ENCODE measurements at regions of chr9 and their contacts with region 1.

Region 1: GRCh38 chr9:70602321-70603019 is 188.0 kb upstream of the KLF9 start:
- DNase-seq: no peak
- ATAC-seq: peak; percentile 75
- H3K4me3 Mint-ChIP-seq: no peak overlapping the region
- H3K27ac Mint-ChIP-seq: no peak overlapping the region
- H3K4me1 Mint-ChIP-seq: peaks cover 10% of the 10 kb centered on the region
- H3K27me3 Mint-ChIP-seq: peaks cover 3% of the 10 kb centered on the region
- CTCF ChIP-seq: peak; percentile 51

Region 2: DNA sequence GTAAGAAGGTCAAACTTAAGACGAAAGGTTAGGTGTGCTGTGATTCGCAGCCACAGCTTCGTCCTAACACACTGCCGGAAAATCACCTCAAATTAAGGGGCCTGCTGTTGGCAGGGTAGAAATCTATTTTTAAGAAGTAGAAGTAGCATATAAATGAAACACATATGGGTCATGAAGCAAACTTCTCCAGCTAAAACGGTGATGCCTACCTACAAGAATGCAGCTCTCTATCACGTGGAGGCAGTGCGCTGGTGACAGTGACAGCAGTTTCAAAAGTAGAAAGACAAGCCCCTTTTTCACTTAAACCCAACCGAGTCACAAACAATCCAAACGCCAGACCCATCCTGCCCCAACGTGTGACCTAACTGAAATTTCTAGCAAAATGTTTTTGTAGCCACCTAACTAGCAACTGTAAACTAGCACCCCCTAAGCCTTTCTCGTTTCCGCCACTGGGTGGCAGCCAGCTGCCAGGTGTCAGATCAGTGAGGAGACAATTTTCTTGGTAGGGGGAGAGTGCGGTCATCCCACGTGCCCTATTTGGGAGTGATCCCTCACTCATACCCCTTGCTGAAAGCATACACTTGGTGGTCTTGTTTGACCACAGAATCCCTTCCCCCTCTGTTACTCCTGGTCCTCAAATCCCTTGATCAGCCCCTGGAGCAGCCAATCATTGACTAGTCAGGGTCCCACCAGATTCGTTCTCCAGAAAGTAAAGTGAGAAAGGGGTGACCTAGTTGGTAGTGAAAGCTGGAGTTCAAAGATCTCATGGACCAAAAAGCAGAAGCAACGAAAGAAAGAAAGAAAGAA is 630.6 kb before region 1 on chr9:
- CTCF ChIA-PET with region 1: interaction called, 41 read pairs
- POLR2A ChIA-PET with region 1: no interaction called
- intact Hi-C with region 1: no loop called
- DNase-seq: peak; percentile 17
- ATAC-seq: no peak
- H3K4me3 Mint-ChIP-seq: no peak overlapping the region
- H3K27ac Mint-ChIP-seq: no peak overlapping the region
- H3K4me1 Mint-ChIP-seq: no peaks in the 10 kb centered on the region
- H3K27me3 Mint-ChIP-seq: peaks cover 16% of the 10 kb centered on the region
- CTCF ChIP-seq: no peak

Region 3: GRCh38 chr9:70340572-70340971 is 261.9 kb before region 1 on chr9:
- CTCF ChIA-PET with region 1: interaction called, 68 read pairs
- POLR2A ChIA-PET with region 1: no interaction called
- intact Hi-C with region 1: loop called (anchors 1 kb)
- DNase-seq: no peak
- ATAC-seq: no peak
- H3K4me3 Mint-ChIP-seq: no peak overlapping the region
- H3K27ac Mint-ChIP-seq: no peak overlapping the region
- H3K4me1 Mint-ChIP-seq: no peaks in the 10 kb centered on the region
- H3K27me3 Mint-ChIP-seq: no peaks in the 10 kb centered on the region
- CTCF ChIP-seq: no peak

Region 4: GRCh38 chr9:70484210-70485130 is 118.0 kb before region 1 on chr9:
- CTCF ChIA-PET with region 1: interaction called, 47 read pairs
- POLR2A ChIA-PET with region 1: no interaction called
- intact Hi-C with region 1: loop called (anchors 1 kb)
- DNase-seq: no peak
- ATAC-seq: peak; percentile 85
- H3K4me3 Mint-ChIP-seq: no peak overlapping the region
- H3K27ac Mint-ChIP-seq: no peak overlapping the region
- H3K4me1 Mint-ChIP-seq: no peaks in the 10 kb centered on the region
- H3K27me3 Mint-ChIP-seq: peaks cover 16% of the 10 kb centered on the region
- CTCF ChIP-seq: peak; percentile 8

Region 5: GRCh38 chr9:70614786-70615463 is 12.5 kb after region 1 on chr9:
- CTCF ChIA-PET with region 1: interaction called, 12 read pairs
- POLR2A ChIA-PET with region 1: no interaction called
- intact Hi-C with region 1: no loop called
- DNase-seq: no peak
- ATAC-seq: no peak
- H3K4me3 Mint-ChIP-seq: no peak overlapping the region
- H3K27ac Mint-ChIP-seq: no peak overlapping the region
- H3K4me1 Mint-ChIP-seq: no peaks in the 10 kb centered on the region
- H3K27me3 Mint-ChIP-seq: peaks cover 5% of the 10 kb centered on the region
- CTCF ChIP-seq: no peak

Region 6: GRCh38 chr9:70656281-70656680 is 53.8 kb after region 1 on chr9:
- CTCF ChIA-PET with region 1: no interaction called
- POLR2A ChIA-PET with region 1: no interaction called
- intact Hi-C with region 1: no loop called
- DNase-seq: no peak
- ATAC-seq: no peak
- H3K4me3 Mint-ChIP-seq: no peak overlapping the region
- H3K27ac Mint-ChIP-seq: no peak overlapping the region
- H3K4me1 Mint-ChIP-seq: no peaks in the 10 kb centered on the region
- H3K27me3 Mint-ChIP-seq: peaks cover 4% of the 10 kb centered on the region
- CTCF ChIP-seq: no peak

Region 7: GRCh38 chr9:71121275-71122021 is 519.0 kb after region 1 on chr9 and contains the start of gene TRPM3:
- CTCF ChIA-PET with region 1: no interaction called
- POLR2A ChIA-PET with region 1: no interaction called
- intact Hi-C with region 1: no loop called
- DNase-seq: no peak
- ATAC-seq: no peak
- H3K4me3 Mint-ChIP-seq: no peak within 1 kb of the TSS
- H3K27ac Mint-ChIP-seq: no peak within 1 kb of the TSS
- H3K4me1 Mint-ChIP-seq: no peaks in the 10 kb centered on the region
- H3K27me3 Mint-ChIP-seq: peaks cover 13% of the 10 kb centered on the region
- CTCF ChIP-seq: no peak
- total RNA-seq, gene TRPM3: not detected in 2 replicates

Measured in activated B cell treated with CpG ODN at 0.5 μM for 24 hours (primary cell).